GM18951 (cell line): ENCODE measurements at regions of chr15 and their contacts with region 1.

Region 1: DNA sequence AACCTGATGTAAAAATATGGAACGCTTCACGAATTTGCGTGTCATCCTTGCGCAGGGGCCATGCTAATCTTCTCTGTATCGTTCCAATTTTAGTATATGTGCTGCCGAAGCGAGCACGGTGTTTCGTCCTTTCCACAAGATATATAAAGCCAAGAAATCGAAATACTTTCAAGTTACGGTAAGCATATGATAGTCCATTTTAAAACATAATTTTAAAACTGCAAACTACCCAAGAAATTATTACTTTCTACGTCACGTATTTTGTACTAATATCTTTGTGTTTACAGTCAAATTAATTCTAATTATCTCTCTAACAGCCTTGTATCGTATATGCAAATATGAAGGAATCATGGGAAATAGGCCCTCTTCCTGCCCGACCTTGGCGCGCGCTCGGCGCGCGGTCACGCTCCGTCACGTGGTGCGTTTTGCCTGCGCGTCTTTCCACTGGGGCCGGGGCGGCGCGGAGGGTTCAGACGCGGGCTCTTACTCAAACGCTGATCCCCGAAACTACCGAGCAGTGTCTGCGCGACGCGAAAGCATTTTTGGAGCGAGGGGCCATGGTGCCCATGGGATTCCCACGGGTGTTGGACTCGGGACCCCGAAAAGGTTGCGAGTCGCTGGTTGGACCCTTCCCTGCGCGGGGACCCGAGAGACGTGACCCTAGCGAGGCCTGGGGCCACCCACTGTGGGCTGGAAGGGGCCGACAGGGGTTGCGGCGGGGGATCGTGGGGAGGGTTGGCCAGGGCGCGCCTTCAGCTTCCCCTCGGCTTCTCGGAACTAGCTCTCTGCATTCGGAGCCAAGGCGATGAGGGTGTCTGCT is at the start of gene RNU6-1:
- POLR2A ChIP-seq: peak; percentile 93

Region 2: DNA sequence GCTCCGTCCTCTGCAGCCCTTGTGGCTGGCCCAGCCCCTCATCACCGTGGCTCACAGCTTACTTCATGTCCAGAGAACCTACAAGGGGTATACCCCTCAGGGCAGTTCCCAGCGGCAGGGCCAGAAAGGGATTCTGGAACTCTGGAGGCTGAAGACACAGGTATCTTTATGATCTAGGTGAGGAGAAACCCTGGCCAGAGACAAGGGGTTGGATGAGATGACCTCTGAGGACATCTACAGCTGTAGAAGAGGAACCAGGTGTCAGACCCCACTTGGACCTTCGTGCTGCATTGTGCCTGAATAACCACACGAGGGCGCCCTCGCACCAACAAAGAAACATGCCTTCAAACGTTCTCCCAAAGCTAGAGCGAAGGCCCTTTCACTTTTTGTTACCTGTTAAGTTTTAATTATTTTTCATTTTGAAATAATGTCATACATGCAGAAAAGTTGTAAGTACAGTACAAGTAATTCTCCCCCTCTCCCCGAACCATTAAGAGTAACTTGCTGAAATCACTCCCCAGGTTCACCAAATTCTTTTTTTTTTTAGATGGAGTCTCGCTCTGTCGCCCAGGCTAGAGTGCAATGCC is 893.5 kb before region 1 on chr15:
- in situ Hi-C with region 1: loop called (anchors 10 kb)
- POLR2A ChIP-seq: no peak

Region 3: DNA sequence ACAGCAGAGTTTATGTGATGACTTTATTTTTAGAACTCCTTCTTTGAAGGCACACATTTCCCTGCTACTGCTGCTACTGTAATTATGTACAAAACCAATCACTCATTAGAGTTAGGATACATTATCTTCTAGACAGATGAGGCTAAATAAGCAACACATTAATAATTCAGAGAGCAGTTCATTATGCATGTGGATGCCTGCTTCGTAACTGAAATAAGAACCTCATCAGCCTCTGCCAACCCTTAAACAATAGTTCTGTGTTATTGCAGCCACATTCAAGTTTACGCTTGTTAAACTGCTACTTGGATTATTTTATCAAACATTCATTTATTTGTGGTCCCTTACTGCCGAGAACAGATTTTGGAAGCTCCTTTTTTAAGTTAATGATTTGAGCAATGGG is 371.7 kb before region 1 on chr15:
- in situ Hi-C with region 1: loop called (anchors 10 kb)
- POLR2A ChIP-seq: no peak

Region 4: GRCh38 chr15:67641453-67641852 is 198.7 kb before region 1 on chr15:
- in situ Hi-C with region 1: no loop called
- POLR2A ChIP-seq: no peak